Psoas muscle (tissue), 8 donors: ENCODE measurements at regions of chr4 and their contacts with region 1.

Region 1: GRCh38 chr4:101347557-101348366 is 436 bp upstream of the PPP3CA start:
- DNase-seq: peak; percentile 99 to 100
- ATAC-seq: peak; percentile 88 to 95 (median 92)
- H3K4me3 ChIP-seq: peak overlapping the region; percentile 84
- H3K27ac ChIP-seq: peak overlapping the region; percentile 87
- H3K4me1 ChIP-seq: peaks cover 22% of the 10 kb centered on the region
- H3K27me3 ChIP-seq: no peaks in the 10 kb centered on the region
- CTCF ChIP-seq: no peak

Region 2: GRCh38 chr4:101191302-101192098 is 156.3 kb before region 1 on chr4:
- intact Hi-C with region 1: loop called (anchors 2 to 5 kb)
- DNase-seq: peak; percentile 67 to 79
- ATAC-seq: peak; percentile 97 to 99 (median 98)
- H3K4me3 ChIP-seq: peak overlapping the region; percentile 24
- H3K27ac ChIP-seq: peak overlapping the region; percentile 64
- H3K4me1 ChIP-seq: peaks cover 49% of the 10 kb centered on the region
- H3K27me3 ChIP-seq: no peaks in the 10 kb centered on the region
- CTCF ChIP-seq: peak; percentile 5

Region 3: DNA sequence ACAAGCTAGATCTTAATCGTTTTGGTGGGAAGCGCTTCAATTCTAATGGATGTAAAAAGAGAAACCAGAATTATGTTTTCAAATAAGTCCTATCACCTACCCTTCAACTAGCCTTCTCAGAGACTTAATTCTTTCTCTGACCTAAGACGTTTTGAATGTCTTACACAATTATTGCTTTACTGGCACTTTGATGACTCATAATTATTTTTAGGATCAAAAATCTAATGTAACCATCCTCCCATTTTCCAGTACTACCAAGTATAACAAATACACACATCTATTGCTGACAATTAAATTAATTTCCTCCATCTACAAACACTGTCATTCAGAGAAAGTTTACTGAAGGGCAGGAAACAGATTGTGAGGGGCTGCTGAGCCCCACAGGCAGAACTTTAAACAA is 109.1 kb before region 1 on chr4:
- intact Hi-C with region 1: loop called in 1 of 2 experiments (anchors 5 kb)
- DNase-seq: no peak
- ATAC-seq: peak; percentile 62 to 91 (median 81)
- H3K4me3 ChIP-seq: no peak overlapping the region
- H3K27ac ChIP-seq: peak overlapping the region; percentile 56
- H3K4me1 ChIP-seq: peaks cover 29% of the 10 kb centered on the region
- H3K27me3 ChIP-seq: no peaks in the 10 kb centered on the region
- CTCF ChIP-seq: no peak

Region 4: DNA sequence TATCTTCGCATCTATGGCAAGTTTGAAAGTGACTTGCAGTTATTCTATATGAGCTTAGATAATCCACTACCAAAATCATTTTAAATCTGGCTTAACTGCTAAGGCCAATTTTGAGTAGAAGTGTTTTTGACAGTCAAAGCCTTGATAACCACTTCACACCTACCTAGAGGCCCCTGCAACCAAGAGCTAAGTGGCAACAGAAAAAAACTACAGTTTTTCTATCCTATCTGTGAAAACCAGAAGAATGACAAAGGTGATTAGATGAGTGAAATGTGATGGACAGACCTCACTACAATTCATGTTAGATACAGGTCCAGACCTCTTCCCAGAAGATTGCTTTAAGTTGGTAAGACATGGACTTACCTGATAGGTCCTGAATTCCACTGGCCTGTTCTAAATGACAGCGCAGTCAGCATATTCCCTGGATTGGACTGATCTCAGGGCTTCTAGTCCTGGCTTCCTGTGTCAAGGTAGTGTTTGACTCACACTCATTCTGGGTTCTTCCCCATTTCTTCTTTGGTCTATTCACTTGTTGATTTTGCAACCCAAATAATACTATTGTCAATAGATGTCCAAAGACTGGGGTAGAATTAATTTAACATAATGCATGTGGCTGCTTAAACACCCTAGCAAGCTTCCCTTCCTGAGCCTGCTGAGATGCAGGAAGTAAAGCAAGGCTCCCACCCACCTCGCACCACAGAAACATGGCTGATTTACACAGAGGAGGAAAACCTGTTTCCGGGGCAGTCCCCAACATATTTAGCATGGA is 65.5 kb before region 1 on chr4:
- intact Hi-C with region 1: loop called in 1 of 2 experiments (anchors 5 kb)
- DNase-seq: no peak
- ATAC-seq: no peak
- H3K4me3 ChIP-seq: no peak overlapping the region
- H3K27ac ChIP-seq: no peak overlapping the region
- H3K4me1 ChIP-seq: peaks cover 43% of the 10 kb centered on the region
- H3K27me3 ChIP-seq: no peaks in the 10 kb centered on the region
- CTCF ChIP-seq: no peak

Region 5: GRCh38 chr4:101730291-101731117 is 382.7 kb after region 1 on chr4:
- intact Hi-C with region 1: loop called in 1 of 2 experiments (anchors 10 kb)
- DNase-seq: peak; percentile 47 to 71
- ATAC-seq: peak; percentile 82 to 97 (median 94)
- H3K4me3 ChIP-seq: no peak overlapping the region
- H3K27ac ChIP-seq: no peak overlapping the region
- H3K4me1 ChIP-seq: no peaks in the 10 kb centered on the region
- H3K27me3 ChIP-seq: no peaks in the 10 kb centered on the region
- CTCF ChIP-seq: peak; percentile 81

Region 6: GRCh38 chr4:102554482-102554881 is 1206.7 kb after region 1 on chr4:
- intact Hi-C with region 1: loop called in 1 of 2 experiments (anchors 10 kb)
- DNase-seq: peak; percentile 78 to 87
- ATAC-seq: peak; percentile 99 to 100 (median 100)
- H3K4me3 ChIP-seq: peak overlapping the region; percentile 10
- H3K27ac ChIP-seq: peak overlapping the region; percentile 72
- H3K4me1 ChIP-seq: peaks cover 38% of the 10 kb centered on the region
- H3K27me3 ChIP-seq: no peaks in the 10 kb centered on the region
- CTCF ChIP-seq: no peak